Esophagus squamous epithelium (tissue), 5 donors: ENCODE measurements at regions of chr1 and their contacts with region 1.

Region 1: GRCh38 chr1:246689409-246690008 is 34.7 kb upstream of the SCCPDH start:
- DNase-seq: no peak
- H3K4me3 ChIP-seq: peak overlapping the region in 3 of 4 donors; percentile 31 to 55 (median 34)
- H3K27ac ChIP-seq: no peak overlapping the region
- H3K4me1 ChIP-seq: peaks cover 10 to 15% (median 10%) of the 10 kb centered on the region in 3 donors
- H3K27me3 ChIP-seq: peaks cover 0 to 5% (median 0%) of the 10 kb centered on the region in 4 donors
- CTCF ChIP-seq: peak; percentile 53 to 87 (median 72)
- POLR2A ChIP-seq: no peak

Region 2: GRCh38 chr1:246566128-246566812 is 123.2 kb before region 1 on chr1 and contains the starts of genes CNST and TFB2M:
- intact Hi-C with region 1: loop called (anchors 10 kb)
- DNase-seq: peak; percentile 88
- H3K4me3 ChIP-seq: peak within 1 kb of the TSS; percentile 84 to 100 (median 98)
- H3K27ac ChIP-seq: peak within 1 kb of the TSS; percentile 92 to 99 (median 99)
- H3K4me1 ChIP-seq: peaks cover 9 to 65% (median 22%) of the 10 kb centered on the region in 3 donors
- H3K27me3 ChIP-seq: no peaks in the 10 kb centered on the region
- CTCF ChIP-seq: peak in 2 of 6 experiments; percentile 9 to 27
- POLR2A ChIP-seq: peak in 3 of 4 donors; percentile 65 to 96 (median 93)
- total RNA-seq, gene CNST: 7.5 to 31.5 (median 12.4) TPM
- total RNA-seq, gene TFB2M: 6.2 to 17.7 (median 12.4) TPM

Region 3: DNA sequence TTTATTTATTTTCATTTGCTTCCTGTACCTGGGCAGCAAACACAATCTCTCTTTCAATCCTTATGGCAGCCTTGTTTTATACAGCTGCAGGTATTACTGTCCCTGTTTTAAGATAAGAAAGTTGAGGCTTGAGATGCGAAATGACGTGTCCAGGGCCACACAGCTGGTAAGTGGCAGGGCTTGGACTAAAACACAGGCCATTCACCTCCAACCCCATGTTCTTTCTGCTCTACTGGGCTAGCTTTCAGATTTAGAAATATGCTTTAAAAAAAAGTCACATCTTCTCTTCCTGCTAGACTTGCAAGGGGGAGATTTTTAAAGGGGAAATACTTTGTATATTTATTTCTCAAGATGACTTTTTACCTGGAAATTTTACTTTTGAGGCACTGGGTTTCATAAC is 60.5 kb before region 1 on chr1:
- intact Hi-C with region 1: no loop called
- DNase-seq: no peak
- H3K4me3 ChIP-seq: no peak overlapping the region
- H3K27ac ChIP-seq: no peak overlapping the region
- H3K4me1 ChIP-seq: peaks cover 0 to 14% (median 7%) of the 10 kb centered on the region in 3 donors
- H3K27me3 ChIP-seq: no peaks in the 10 kb centered on the region
- CTCF ChIP-seq: no peak
- POLR2A ChIP-seq: no peak